Heart right ventricle (tissue), 16 donors: ENCODE measurements at regions of chr10 and their contacts with region 1.

Region 1: DNA sequence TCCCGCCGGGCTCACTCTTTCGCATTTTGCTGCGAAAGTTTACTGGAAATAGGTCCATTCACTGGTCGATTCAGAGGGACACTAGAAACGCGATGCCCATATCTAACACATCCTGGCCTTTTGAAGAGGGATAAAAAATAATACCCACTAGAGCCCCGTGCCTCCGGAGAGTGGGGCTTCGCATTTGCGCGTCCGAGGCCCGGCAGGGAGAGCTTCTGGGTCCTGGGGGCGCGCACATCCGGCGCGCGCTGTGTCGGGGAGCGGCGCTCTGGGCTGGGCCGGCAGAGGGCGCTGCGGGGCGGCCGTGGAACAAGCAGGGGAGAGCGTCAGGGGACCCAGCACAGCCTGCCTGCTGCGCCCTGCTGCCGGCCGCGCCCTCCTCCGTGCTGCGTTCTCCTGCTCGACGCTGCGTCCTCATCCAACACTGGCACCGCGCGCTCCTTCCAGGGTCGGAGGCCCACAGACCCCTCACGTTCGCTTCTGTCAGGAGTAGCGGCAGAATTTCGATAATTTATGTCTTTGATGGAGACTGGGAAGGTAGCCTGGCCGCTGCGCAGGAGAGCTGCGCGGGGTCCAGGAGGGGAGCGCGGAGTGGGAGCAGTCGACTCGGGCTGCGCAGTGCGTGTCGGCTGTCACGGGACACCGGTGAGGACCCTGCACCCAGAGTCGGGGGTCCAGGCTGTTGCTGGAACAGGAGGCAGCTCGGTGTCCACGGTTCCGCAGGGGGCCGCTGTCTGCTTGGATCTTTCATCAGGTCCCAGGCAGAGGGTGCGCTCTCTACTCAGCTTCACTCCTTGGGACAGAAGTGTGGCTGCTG is 41.5 kb upstream of the ZNF32 start:
- DNase-seq: peak; percentile 88 to 92
- ATAC-seq: peak; percentile 95 to 99 (median 98)
- H3K4me3 ChIP-seq: peak overlapping the region; percentile 39 to 77 (median 64)
- H3K27ac ChIP-seq: peak overlapping the region; percentile 66 to 99 (median 92)
- H3K4me1 ChIP-seq: peaks cover 3 to 69% (median 31%) of the 10 kb centered on the region in 9 donors
- H3K27me3 ChIP-seq: peaks cover 0 to 4% (median 0%) of the 10 kb centered on the region in 7 donors
- CTCF ChIP-seq: peak; percentile 74 to 92 (median 87)

Region 2: GRCh38 chr10:43775384-43775783 is 85.2 kb after region 1 on chr10:
- intact Hi-C with region 1: loop called in 4 of 10 experiments (anchors 5 to 10 kb)
- DNase-seq: no peak
- ATAC-seq: no peak
- H3K4me3 ChIP-seq: no peak overlapping the region
- H3K27ac ChIP-seq: no peak overlapping the region
- H3K4me1 ChIP-seq: peaks cover 0 to 15% (median 0%) of the 10 kb centered on the region in 9 donors
- H3K27me3 ChIP-seq: no peaks in the 10 kb centered on the region
- CTCF ChIP-seq: no peak

Region 3: DNA sequence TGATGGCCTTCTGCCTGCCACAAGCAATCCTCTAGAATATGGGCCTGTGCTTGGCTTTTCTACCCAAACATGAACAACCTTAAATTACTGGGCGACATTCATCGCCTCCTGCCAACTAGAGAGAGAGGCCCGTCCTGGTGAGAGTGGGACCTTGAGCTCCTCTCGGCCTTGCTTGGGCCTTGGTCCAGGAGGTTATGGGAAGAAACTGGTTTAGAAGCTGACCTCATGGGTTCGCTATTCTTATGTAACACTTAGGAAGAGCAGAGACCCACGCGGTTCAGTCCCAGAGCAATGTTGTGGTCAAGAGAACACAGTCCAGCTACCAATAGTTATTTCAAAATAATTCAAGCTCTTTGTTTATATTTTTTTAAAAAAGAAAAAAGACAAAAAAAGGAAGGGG is 134.8 kb after region 1 on chr10:
- intact Hi-C with region 1: loop called in 1 of 10 experiments (anchors 5 kb)
- DNase-seq: peak; percentile 65 to 90
- ATAC-seq: peak; percentile 90 to 95 (median 95)
- H3K4me3 ChIP-seq: no peak overlapping the region
- H3K27ac ChIP-seq: peak overlapping the region; percentile 29 to 96 (median 87)
- H3K4me1 ChIP-seq: peaks cover 14 to 58% (median 49%) of the 10 kb centered on the region in 9 donors
- H3K27me3 ChIP-seq: no peaks in the 10 kb centered on the region
- CTCF ChIP-seq: no peak

Region 4: GRCh38 chr10:43863859-43864591 is 173.9 kb after region 1 on chr10:
- intact Hi-C with region 1: loop called in 3 of 10 experiments (anchors 5 kb)
- DNase-seq: peak; percentile 44 to 64
- ATAC-seq: peak; percentile 64 to 88 (median 85)
- H3K4me3 ChIP-seq: no peak overlapping the region
- H3K27ac ChIP-seq: peak overlapping the region; percentile 60 to 96 (median 84)
- H3K4me1 ChIP-seq: peaks cover 13 to 88% (median 40%) of the 10 kb centered on the region in 9 donors
- H3K27me3 ChIP-seq: no peaks in the 10 kb centered on the region
- CTCF ChIP-seq: no peak

Region 5: GRCh38 chr10:43905512-43906236 is 215.5 kb after region 1 on chr10:
- intact Hi-C with region 1: loop called in 3 of 10 experiments (anchors 5 to 10 kb)
- DNase-seq: peak; percentile 43 to 65
- ATAC-seq: peak; percentile 50 to 71 (median 61)
- H3K4me3 ChIP-seq: no peak overlapping the region
- H3K27ac ChIP-seq: peak overlapping the region in 9 of 10 donors; percentile 47 to 85 (median 64)
- H3K4me1 ChIP-seq: peaks cover 12 to 51% (median 32%) of the 10 kb centered on the region in 9 donors
- H3K27me3 ChIP-seq: no peaks in the 10 kb centered on the region
- CTCF ChIP-seq: no peak

Region 6: GRCh38 chr10:44020322-44021111 is 330.4 kb after region 1 on chr10:
- intact Hi-C with region 1: loop called in 3 of 10 experiments (anchors 10 kb)
- DNase-seq: peak in 1 of 2 donors; percentile 42
- ATAC-seq: peak; percentile 41 to 83 (median 67)
- H3K4me3 ChIP-seq: no peak overlapping the region
- H3K27ac ChIP-seq: peak overlapping the region in 1 of 10 donors; percentile 17
- H3K4me1 ChIP-seq: peaks cover 9 to 39% (median 19%) of the 10 kb centered on the region in 9 donors
- H3K27me3 ChIP-seq: no peaks in the 10 kb centered on the region
- CTCF ChIP-seq: no peak

Region 7: DNA sequence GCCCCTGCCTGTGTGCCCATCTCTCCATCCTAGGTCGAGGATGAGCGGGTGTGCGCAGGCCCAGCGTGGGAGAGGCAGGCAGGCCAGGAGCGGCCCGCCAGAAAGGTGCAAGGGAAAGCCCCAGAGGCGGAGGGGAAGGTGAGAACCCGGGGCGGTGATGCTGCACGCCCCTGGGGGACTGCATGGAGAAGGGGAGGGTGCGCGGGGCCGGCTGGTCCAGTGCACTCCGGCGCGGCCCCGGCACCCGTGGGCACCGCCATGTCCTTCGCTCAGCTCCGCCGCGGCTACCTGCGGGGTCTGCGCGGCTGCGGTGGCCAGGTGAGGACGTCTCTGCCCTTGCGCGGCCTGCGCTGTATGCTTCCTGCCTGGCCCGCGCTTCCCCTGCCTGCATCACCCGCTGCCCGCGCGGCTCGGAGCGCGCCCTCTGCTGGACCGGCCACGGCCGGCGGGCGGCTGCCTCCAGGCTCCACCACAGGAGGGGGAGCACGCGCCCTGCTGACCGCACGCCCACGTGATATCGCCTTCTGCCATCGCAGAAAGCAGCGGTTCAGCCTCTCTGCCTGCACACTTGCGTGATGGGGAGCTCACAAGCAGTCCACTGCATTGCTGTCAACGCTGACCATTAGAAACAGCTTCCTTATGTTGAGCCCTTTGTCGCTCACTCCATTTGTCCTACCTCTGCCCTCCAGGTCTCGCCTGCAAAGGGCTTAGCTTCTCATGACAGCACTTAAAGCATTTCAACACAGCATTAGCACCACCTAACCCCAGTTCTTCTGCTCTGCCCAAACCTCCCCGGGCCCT is 620.8 kb after region 1 on chr10:
- intact Hi-C with region 1: loop called in 8 of 10 experiments (anchors 2 to 10 kb)
- DNase-seq: peak; percentile 87 to 91
- ATAC-seq: peak; percentile 95 to 99 (median 98)
- H3K4me3 ChIP-seq: peak overlapping the region in 9 of 10 donors; percentile 26 to 55 (median 48)
- H3K27ac ChIP-seq: peak overlapping the region in 5 of 10 donors; percentile 46 to 72 (median 65)
- H3K4me1 ChIP-seq: peaks cover 4 to 14% (median 10%) of the 10 kb centered on the region in 9 donors
- H3K27me3 ChIP-seq: no peaks in the 10 kb centered on the region
- CTCF ChIP-seq: peak; percentile 90 to 100 (median 98)